ENCODE measurements at regions of chr12 and their contacts with region 1.

Region 1: DNA sequence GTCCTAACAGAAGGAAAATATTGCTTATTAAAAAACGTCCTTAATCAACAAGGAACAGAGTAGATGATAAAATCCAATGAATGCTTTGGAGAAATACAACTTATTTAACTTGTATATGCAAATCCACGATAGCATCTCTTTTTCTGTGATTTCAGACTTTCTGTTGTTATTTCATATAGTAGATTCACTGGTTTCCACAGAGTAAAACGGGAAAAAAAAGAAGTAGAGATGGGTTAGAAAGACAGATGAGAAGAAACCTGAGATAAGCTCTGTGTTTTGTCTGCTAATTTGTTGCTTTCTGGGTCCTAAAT is 447.7 kb downstream of the RERGL start:
- DNase-seq: no peak
- ATAC-seq: no peak
- H3K4me3 ChIP-seq: no peak overlapping the region
- H3K27ac ChIP-seq: no peak overlapping the region
- H3K4me1 ChIP-seq: no peaks in the 10 kb centered on the region
- H3K27me3 ChIP-seq: peaks cover 0 to 10% (median 0%) of the 10 kb centered on the region in 7 donors
- CTCF ChIP-seq: peak in 1 of 9 donors; percentile 15

Region 2: GRCh38 chr12:16076553-16076952 is 1565.7 kb before region 1 on chr12:
- intact Hi-C with region 1: loop called in 1 of 10 experiments (anchors 10 kb)
- DNase-seq: no peak
- ATAC-seq: peak in 2 of 8 donors; percentile 25 to 31
- H3K4me3 ChIP-seq: no peak overlapping the region
- H3K27ac ChIP-seq: no peak overlapping the region
- H3K4me1 ChIP-seq: no peaks in the 10 kb centered on the region
- H3K27me3 ChIP-seq: peaks cover 0 to 3% (median 0%) of the 10 kb centered on the region in 7 donors
- CTCF ChIP-seq: peak in 7 of 9 donors; percentile 19 to 45 (median 36)

Region 3: GRCh38 chr12:16385782-16386646 is 1256.3 kb before region 1 on chr12:
- intact Hi-C with region 1: loop called in 1 of 10 experiments (anchors 5 kb)
- DNase-seq: peak in 1 of 2 donors; percentile 16
- ATAC-seq: peak; percentile 22 to 85 (median 69)
- H3K4me3 ChIP-seq: peak overlapping the region in 3 of 10 donors; percentile 3 to 26 (median 17)
- H3K27ac ChIP-seq: no peak overlapping the region
- H3K4me1 ChIP-seq: peaks cover 0 to 4% (median 0%) of the 10 kb centered on the region in 9 donors
- H3K27me3 ChIP-seq: peaks cover 0 to 5% (median 0%) of the 10 kb centered on the region in 7 donors
- CTCF ChIP-seq: peak in 7 of 9 donors; percentile 20 to 59 (median 46)